ENCODE measurements at regions of chr3 and their contacts with region 1.

Region 1: DNA sequence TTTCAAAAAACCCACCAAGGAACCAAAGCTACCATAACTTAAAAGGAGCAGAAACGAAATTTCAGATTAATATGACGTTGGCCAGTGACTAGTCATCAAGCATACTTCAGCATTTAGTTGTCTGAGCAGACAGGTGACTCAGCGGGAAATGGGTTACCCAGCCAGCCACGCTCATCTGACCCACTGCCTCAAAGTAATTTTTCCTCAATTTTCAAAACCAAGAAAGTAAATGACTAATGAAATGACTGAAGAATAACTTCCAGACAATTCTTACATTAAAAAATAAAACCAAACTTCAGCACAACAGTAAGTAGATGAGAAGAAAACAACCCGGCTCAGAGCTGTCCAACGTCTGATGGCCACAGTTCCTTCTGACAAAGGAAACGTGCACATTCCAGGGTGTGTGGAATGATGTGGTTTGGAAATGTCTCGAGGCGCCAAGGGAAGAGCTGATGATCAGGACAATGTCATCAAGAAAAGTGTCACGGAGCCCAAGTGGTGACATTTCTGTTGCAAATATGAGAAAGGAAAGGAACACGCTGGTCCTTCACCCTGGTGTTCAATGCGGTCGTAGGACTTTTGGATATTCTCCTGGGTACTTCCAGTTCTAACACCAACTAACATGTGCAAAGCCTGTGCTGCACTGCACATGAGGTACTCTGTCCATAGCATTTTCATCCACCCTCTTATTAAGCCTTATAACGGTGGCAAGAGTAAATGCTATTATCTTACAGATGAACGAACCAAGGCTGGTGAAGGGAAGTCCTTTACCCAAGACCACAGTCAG is 79.1 kb downstream of the FOXP1 start:
- DNase-seq: no peak
- ATAC-seq: no peak
- H3K4me3 Mint-ChIP-seq: no peak overlapping the region
- H3K27ac Mint-ChIP-seq: peak overlapping the region; percentile 14
- H3K4me1 Mint-ChIP-seq: peaks cover 63% of the 10 kb centered on the region
- H3K27me3 Mint-ChIP-seq: no peaks in the 10 kb centered on the region
- CTCF ChIP-seq: no peak

Region 2: DNA sequence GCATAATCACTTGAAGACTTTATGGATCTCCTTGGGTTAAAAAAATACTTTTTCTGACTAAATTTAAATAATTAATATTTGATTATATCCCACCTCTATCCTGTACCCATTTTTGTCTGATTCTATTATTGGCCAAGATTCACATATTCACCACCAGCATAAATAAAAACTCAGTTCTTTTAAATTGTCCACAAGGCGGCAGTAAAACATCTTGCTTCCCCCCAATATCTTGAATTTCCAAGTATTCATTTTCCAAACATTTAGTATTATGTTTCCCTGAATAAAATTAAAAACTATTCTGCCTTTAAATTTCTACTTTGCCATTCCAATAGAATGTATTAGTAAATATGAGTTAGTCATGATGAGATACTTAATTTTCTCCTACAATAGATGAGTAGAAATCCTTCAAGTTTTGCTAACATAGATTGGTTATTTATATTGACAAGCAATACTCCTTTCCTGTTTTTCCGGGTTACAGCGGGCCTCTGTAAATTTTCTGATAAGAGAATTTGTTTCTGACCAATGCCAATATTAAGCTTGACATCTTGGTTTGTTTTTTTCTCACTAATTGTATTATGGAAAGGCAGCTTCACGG is 973.3 kb before region 1 on chr3:
- CTCF ChIA-PET with region 1: no interaction called
- POLR2A ChIA-PET with region 1: no interaction called
- intact Hi-C with region 1: loop called (anchors 5 kb)
- DNase-seq: no peak
- ATAC-seq: no peak
- H3K4me3 Mint-ChIP-seq: no peak overlapping the region
- H3K27ac Mint-ChIP-seq: no peak overlapping the region
- H3K4me1 Mint-ChIP-seq: no peaks in the 10 kb centered on the region
- H3K27me3 Mint-ChIP-seq: no peaks in the 10 kb centered on the region
- CTCF ChIP-seq: no peak

Region 3: GRCh38 chr3:70753597-70753996 is 750.8 kb before region 1 on chr3:
- CTCF ChIA-PET with region 1: no interaction called
- POLR2A ChIA-PET with region 1: no interaction called
- intact Hi-C with region 1: no loop called
- DNase-seq: no peak
- ATAC-seq: no peak
- H3K4me3 Mint-ChIP-seq: no peak overlapping the region
- H3K27ac Mint-ChIP-seq: no peak overlapping the region
- H3K4me1 Mint-ChIP-seq: no peaks in the 10 kb centered on the region
- H3K27me3 Mint-ChIP-seq: peaks cover 3% of the 10 kb centered on the region
- CTCF ChIP-seq: no peak

Region 4: GRCh38 chr3:71389911-71390573 is 114.4 kb before region 1 on chr3:
- CTCF ChIA-PET with region 1: no interaction called
- POLR2A ChIA-PET with region 1: interaction called, 17 read pairs
- intact Hi-C with region 1: no loop called
- DNase-seq: no peak
- ATAC-seq: peak; percentile 6
- H3K4me3 Mint-ChIP-seq: peak overlapping the region; percentile 73
- H3K27ac Mint-ChIP-seq: peak overlapping the region; percentile 99
- H3K4me1 Mint-ChIP-seq: peaks cover 86% of the 10 kb centered on the region
- H3K27me3 Mint-ChIP-seq: no peaks in the 10 kb centered on the region
- CTCF ChIP-seq: no peak

Region 5: GRCh38 chr3:71487418-71487817 is 17.0 kb before region 1 on chr3:
- CTCF ChIA-PET with region 1: no interaction called
- POLR2A ChIA-PET with region 1: no interaction called
- intact Hi-C with region 1: no loop called
- DNase-seq: no peak
- ATAC-seq: peak; percentile 86
- H3K4me3 Mint-ChIP-seq: peak overlapping the region; percentile 24
- H3K27ac Mint-ChIP-seq: peak overlapping the region; percentile 75
- H3K4me1 Mint-ChIP-seq: peaks cover 60% of the 10 kb centered on the region
- H3K27me3 Mint-ChIP-seq: no peaks in the 10 kb centered on the region
- CTCF ChIP-seq: no peak

Region 6: GRCh38 chr3:71548705-71549384 is 44.4 kb after region 1 on chr3:
- CTCF ChIA-PET with region 1: no interaction called
- POLR2A ChIA-PET with region 1: no interaction called
- intact Hi-C with region 1: no loop called
- DNase-seq: no peak
- ATAC-seq: peak; percentile 70
- H3K4me3 Mint-ChIP-seq: no peak overlapping the region
- H3K27ac Mint-ChIP-seq: no peak overlapping the region
- H3K4me1 Mint-ChIP-seq: peaks cover 25% of the 10 kb centered on the region
- H3K27me3 Mint-ChIP-seq: no peaks in the 10 kb centered on the region
- CTCF ChIP-seq: no peak

Region 7: GRCh38 chr3:71659864-71660591 is 155.6 kb after region 1 on chr3:
- CTCF ChIA-PET with region 1: no interaction called
- POLR2A ChIA-PET with region 1: no interaction called
- intact Hi-C with region 1: no loop called
- DNase-seq: no peak
- ATAC-seq: no peak
- H3K4me3 Mint-ChIP-seq: no peak overlapping the region
- H3K27ac Mint-ChIP-seq: no peak overlapping the region
- H3K4me1 Mint-ChIP-seq: no peaks in the 10 kb centered on the region
- H3K27me3 Mint-ChIP-seq: peaks cover 6% of the 10 kb centered on the region
- CTCF ChIP-seq: no peak

Measured in activated B cell treated with CpG ODN at 0.5 μM for 24 hours (primary cell).